Endothelial cell of umbilical vein (primary cell): ENCODE measurements at regions of chr16 and their contacts with region 1.

Region 1: GRCh38 chr16:27154705-27155521 is 48.4 kb upstream of the KDM8 start:
- DNase-seq: peak; percentile 38
- H3K4me3 ChIP-seq: no peak overlapping the region
- H3K27ac ChIP-seq: no peak overlapping the region
- H3K4me1 ChIP-seq: no peaks in the 10 kb centered on the region
- H3K27me3 ChIP-seq: no peaks in the 10 kb centered on the region
- CTCF ChIP-seq: peak; percentile 94 to 96
- POLR2A ChIP-seq: no peak

Region 2: GRCh38 chr16:27066668-27067537 is 88.0 kb before region 1 on chr16 and contains the start of gene C16orf82:
- CTCF ChIA-PET with region 1: no interaction called
- POLR2A ChIA-PET with region 1: no interaction called
- dilution Hi-C with region 1: no loop called
- intact Hi-C with region 1: no loop called
- DNase-seq: no peak
- H3K4me3 ChIP-seq: no peak within 1 kb of the TSS
- H3K27ac ChIP-seq: no peak within 1 kb of the TSS
- H3K4me1 ChIP-seq: no peaks in the 10 kb centered on the region
- H3K27me3 ChIP-seq: no peaks in the 10 kb centered on the region
- CTCF ChIP-seq: no peak
- POLR2A ChIP-seq: no peak
- total RNA-seq, gene C16orf82: not detected in 2 replicates

Region 3: GRCh38 chr16:27461483-27462171 is 306.7 kb after region 1 on chr16:
- CTCF ChIA-PET with region 1: no interaction called
- POLR2A ChIA-PET with region 1: no interaction called
- dilution Hi-C with region 1: no loop called
- intact Hi-C with region 1: loop called (anchors 1 kb)
- DNase-seq: peak; percentile 69
- H3K4me3 ChIP-seq: no peak overlapping the region
- H3K27ac ChIP-seq: peak overlapping the region; percentile 61
- H3K4me1 ChIP-seq: peaks cover 16% of the 10 kb centered on the region
- H3K27me3 ChIP-seq: no peaks in the 10 kb centered on the region
- CTCF ChIP-seq: no peak
- POLR2A ChIP-seq: no peak